Kidney (tissue), 22 donors: ENCODE measurements at regions of chr19 and their contacts with region 1.

Region 1: DNA sequence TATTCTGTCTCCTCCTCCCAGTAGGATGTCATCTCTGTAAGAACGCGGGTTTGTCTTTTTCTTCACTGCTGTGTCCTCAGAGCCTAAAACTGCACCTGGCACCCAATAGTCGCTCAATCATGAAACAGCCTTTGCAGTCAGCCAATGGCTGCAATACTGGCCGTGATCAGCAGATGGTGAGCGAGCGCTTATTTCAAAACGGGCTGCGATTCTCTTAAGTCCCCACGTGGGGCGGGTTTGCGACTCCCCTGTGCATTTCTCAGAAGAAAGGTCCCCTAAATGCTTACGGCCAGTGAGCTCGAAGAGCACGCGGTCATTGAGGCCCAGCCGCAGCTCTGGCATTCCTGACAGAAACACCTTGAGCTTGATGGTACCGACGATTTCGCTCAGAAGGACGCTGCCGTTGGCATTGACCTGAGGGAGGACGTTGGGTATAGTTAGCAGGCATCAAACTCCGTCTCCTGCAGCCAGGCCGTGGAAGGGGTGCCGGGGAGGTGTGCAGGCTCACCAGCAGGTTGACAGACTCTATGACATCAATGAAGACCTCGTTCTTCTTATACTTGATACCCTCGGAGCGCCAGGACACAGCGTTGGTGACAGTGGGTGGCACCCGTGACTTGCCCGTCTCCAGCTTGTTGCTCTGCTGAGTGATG is 6.0 kb downstream of the AP1M2 start:
- DNase-seq: peak; percentile 91 to 96 (median 92)
- H3K4me3 ChIP-seq: peak overlapping the region in 2 of 3 donors; percentile 18 to 41
- H3K27ac ChIP-seq: no peak overlapping the region
- H3K4me1 ChIP-seq: peaks cover 0 to 4% (median 3%) of the 10 kb centered on the region in 3 donors
- H3K27me3 ChIP-seq: no peaks in the 10 kb centered on the region
- CTCF ChIP-seq: peak; percentile 100

Region 2: GRCh38 chr19:10499551-10500246 is 81.4 kb before region 1 on chr19:
- intact Hi-C with region 1: no loop called
- DNase-seq: no peak
- H3K4me3 ChIP-seq: no peak overlapping the region
- H3K27ac ChIP-seq: no peak overlapping the region
- H3K4me1 ChIP-seq: peaks cover 0 to 10% (median 0%) of the 10 kb centered on the region in 3 donors
- H3K27me3 ChIP-seq: no peaks in the 10 kb centered on the region
- CTCF ChIP-seq: no peak

Region 3: DNA sequence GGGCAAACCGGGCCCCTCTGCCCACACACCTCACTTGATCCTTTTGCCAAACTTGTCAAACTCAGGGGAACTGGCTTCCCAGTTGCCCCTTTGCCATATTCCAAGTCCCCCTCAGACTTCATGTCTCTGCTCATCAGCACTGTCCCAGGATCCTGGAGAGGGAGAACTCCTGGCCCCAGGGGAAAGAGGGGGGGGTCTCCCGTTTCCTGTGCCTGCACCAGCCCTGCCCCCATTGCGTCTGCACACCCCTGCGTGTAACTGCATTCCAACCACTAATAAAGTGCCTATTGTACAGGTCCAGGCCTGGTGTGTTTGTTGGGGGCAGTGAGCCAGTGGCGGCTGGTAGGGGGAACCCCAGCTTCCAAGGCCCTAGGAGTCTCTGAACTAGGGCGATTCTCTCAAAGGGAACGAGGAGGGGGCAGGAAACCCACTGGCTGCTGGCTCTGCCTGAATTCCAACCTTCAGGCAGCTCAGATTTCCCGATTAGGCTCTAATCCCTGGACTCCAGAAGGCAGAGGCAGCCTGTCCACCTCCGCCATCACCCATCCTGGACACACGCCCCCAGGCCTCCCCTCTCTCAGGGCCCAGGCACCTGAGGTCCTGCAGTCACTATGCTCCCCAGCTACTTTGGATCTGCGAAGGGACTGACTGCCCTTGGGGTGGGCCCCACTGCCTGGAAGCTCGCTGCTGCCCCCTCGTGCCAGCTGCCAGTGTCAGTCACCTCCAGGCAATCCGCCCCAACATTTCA is 63.3 kb after region 1 on chr19:
- intact Hi-C with region 1: loop called (anchors 5 kb)
- DNase-seq: peak; percentile 87 to 94 (median 91)
- H3K4me3 ChIP-seq: no peak overlapping the region
- H3K27ac ChIP-seq: peak overlapping the region in 1 of 2 donors; percentile 42
- H3K4me1 ChIP-seq: peaks cover 0 to 8% (median 0%) of the 10 kb centered on the region in 3 donors
- H3K27me3 ChIP-seq: no peaks in the 10 kb centered on the region
- CTCF ChIP-seq: peak; percentile 93